ENCODE measurements at regions of chr7 and their contacts with region 1.

Region 1: DNA sequence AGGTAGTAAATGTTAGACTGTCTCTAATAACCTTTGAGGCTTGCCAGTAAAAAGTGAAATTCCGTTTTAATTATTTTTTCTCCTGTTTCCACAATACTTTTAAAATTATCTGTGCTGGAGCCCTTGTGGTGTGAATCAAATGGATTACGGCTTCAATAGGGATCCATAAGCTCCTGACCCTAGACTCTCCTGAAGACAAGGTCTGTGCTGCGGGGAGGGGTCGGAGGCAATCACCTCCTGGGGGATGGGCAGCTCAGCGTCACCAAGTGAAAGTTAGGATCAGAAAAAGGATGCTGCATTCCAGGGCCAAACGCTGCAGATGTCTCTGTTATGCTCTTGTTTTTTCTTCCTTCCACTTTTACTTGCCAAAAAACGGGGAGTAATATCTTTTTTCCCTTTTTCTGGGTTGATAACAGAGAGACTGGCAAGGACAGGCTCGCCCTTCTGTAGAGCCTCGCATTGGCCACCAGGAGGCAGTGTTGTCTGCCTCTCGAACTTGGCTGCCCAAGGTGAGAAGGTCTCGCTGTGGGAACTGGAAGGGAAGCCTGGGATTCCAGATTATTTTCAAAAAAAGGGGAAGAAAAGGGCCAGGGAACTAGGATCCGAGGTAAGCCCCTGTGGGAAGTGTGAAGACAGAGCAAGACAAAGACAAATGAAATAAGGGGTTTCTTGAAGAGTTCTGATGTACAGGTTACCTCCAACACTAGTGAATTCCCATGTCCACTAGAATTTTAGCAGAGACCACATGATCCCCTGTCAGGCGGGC is 621.9 kb downstream of the ACTR3B start:
- DNase-seq: peak; percentile 60
- H3K4me3 ChIP-seq: no peak overlapping the region
- H3K27ac ChIP-seq: no peak overlapping the region
- H3K4me1 ChIP-seq: no peaks in the 10 kb centered on the region
- H3K27me3 ChIP-seq: no peaks in the 10 kb centered on the region
- CTCF ChIP-seq: peak; percentile 47
- EP300 ChIP-seq: no peak
- RAD21 ChIP-seq: peak; percentile 78

Region 2: DNA sequence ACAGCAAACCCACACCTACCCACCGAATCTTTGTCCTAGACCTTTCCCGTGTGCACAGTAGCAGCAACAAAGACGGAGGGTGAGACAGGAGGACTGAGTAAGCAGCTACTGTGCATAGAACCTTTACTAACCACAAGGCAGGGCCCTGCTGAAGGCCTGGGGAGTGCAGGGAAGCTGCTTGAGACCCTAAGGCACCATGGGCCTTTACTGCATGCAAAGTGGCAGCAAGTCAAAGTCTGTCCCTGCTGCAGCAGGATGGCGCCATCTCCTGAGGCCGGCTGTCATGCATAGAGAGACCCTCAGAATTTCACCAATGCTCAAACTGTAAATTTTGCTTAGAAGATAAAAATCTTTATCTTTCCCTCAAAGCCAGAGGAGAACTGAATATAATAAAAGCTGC is 11.4 kb before region 1 on chr7:
- CTCF ChIA-PET with region 1: interaction called, 12 read pairs
- POLR2A ChIA-PET with region 1: no interaction called
- DNase-seq: no peak
- H3K4me3 ChIP-seq: no peak overlapping the region
- H3K27ac ChIP-seq: no peak overlapping the region
- H3K4me1 ChIP-seq: no peaks in the 10 kb centered on the region
- H3K27me3 ChIP-seq: no peaks in the 10 kb centered on the region
- CTCF ChIP-seq: no peak
- EP300 ChIP-seq: no peak
- RAD21 ChIP-seq: no peak